Astrocyte of the cerebellum (primary cell): ENCODE measurements at regions of chr13 and their contacts with region 1.

Region 1: GRCh38 chr13:76473552-76474134 is 412.6 kb downstream of the KCTD12 start:
- DNase-seq: peak; percentile 75
- H3K4me3 ChIP-seq: no peak overlapping the region
- CTCF ChIP-seq: peak; percentile 71

Region 2: DNA sequence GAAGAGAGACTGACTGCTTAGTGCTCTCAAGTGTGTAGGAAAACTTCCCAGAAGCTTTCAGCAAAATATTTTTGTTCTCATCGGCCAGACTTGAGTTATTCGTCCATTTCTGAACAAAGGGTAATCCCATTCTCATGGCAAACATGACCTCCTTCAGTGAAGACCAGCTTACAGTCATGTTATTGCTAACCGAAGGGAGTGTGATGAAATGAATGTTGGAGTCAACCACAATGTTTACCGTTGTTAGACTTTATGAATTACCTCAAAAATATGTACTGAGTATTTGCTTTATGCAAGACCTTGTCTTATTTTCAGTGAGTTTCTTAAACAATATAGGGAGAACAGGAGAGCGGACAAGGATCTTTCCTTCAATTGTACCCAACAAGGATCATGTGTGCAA is 608.9 kb before region 1 on chr13:
- in situ Hi-C with region 1: loop called (anchors 10 kb)
- DNase-seq: no peak
- H3K4me3 ChIP-seq: no peak overlapping the region
- CTCF ChIP-seq: no peak

Region 3: GRCh38 chr13:75931116-75931515 is 542.5 kb before region 1 on chr13:
- in situ Hi-C with region 1: no loop called
- DNase-seq: peak; percentile 13
- H3K4me3 ChIP-seq: no peak overlapping the region
- CTCF ChIP-seq: no peak

Region 4: DNA sequence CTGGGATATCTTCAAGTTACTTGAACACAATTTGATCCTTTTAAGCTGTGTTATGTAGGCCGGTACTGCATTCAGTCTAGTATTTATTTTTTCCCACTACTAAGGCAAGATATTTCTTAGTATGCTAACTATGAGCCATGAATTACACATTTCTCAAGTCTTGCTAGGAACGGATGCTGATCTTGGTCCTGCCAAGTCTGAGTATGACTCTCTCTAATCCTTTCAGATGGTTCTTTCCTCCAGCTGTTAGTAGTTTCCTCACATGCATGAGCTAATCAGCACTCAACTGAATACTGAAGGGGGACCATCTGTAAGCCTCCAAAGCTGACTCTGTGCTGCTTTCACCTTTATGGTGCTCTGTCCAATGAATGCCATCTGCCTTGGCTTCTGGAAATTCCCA is 47.7 kb before region 1 on chr13:
- in situ Hi-C with region 1: no loop called
- DNase-seq: peak; percentile 58
- H3K4me3 ChIP-seq: no peak overlapping the region
- CTCF ChIP-seq: no peak

Region 5: GRCh38 chr13:76552041-76552772 is 78.6 kb after region 1 on chr13:
- in situ Hi-C with region 1: no loop called
- DNase-seq: no peak
- H3K4me3 ChIP-seq: no peak overlapping the region
- CTCF ChIP-seq: no peak